ENCODE measurements at regions of chr10 and their contacts with region 1.

Region 1: DNA sequence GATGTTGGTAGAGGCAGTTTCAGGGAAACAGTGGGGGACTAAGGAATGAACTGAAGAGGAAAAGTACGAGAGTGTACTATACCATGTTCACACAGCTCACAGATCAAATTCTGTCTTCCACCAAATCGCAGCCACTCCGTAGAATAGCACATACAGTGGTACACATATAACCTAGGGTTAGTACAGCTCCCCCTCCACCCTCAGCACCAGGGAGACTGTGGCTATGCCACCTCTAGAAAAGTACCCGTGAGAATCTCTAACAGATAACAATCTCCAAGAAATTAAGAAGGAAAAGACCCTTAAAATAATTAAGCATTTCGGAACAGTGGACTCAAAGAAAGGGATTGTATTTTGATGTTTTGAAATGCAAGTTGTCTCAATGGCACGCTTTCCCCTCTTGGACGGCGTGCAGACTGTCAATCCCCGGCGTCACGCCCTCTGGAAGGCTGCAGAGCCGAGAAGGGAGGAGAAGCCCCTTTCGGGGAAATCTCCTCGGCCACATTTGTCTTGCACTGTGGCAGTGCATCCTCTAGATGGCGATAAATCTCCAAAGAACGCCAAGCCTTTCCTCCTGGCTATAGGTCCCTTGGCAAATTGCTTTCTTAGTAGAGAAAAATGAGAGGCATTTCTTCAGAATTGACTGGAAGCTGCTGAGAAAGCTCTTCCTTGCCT is 345.0 kb downstream of the REEP3 start:
- DNase-seq: peak; percentile 69
- H3K27ac ChIP-seq: no peak overlapping the region
- CTCF ChIP-seq: peak; percentile 90

Region 2: DNA sequence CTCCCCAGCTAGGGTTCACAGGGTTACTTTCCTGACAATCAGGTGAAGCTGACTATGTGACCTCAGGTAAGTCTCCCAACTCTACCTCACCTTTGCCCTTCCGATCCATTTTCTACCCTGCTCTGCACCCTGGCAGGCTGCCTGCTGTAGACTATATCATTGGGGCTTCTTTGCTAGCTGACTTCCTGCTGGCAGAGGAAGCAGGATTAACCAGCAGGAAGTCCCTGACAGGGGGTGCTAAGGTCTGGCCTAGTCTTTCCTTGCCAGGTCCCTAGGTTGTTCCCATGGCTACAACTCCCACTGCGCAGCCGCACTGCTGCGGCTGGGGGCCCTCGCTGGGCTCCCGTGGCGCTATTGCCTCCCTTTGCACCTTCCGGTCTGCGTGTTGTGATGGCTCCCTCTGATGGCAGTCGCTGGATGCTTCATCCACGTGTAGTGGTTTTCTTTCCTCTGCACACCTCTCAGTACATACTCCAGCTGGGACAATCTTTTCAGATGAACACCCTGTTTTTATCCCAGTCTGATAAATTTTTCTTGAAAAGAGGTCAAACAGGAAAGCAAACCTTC is 20.9 kb after region 1 on chr10:
- CTCF ChIA-PET with region 1: interaction called, 17 read pairs
- POLR2A ChIA-PET with region 1: no interaction called
- DNase-seq: no peak
- H3K27ac ChIP-seq: no peak overlapping the region
- CTCF ChIP-seq: no peak

Region 3: GRCh38 chr10:63976538-63976937 is 110.3 kb after region 1 on chr10:
- CTCF ChIA-PET with region 1: interaction called, 16 read pairs
- POLR2A ChIA-PET with region 1: no interaction called
- DNase-seq: peak; percentile 11
- H3K27ac ChIP-seq: no peak overlapping the region
- CTCF ChIP-seq: no peak; the same call in 1 of the 2 replicates

Measured in RWPE1 (cell line).